CD8-positive, alpha-beta memory T cell (primary cell): ENCODE measurements at regions of chr6 and their contacts with region 1.

Region 1: DNA sequence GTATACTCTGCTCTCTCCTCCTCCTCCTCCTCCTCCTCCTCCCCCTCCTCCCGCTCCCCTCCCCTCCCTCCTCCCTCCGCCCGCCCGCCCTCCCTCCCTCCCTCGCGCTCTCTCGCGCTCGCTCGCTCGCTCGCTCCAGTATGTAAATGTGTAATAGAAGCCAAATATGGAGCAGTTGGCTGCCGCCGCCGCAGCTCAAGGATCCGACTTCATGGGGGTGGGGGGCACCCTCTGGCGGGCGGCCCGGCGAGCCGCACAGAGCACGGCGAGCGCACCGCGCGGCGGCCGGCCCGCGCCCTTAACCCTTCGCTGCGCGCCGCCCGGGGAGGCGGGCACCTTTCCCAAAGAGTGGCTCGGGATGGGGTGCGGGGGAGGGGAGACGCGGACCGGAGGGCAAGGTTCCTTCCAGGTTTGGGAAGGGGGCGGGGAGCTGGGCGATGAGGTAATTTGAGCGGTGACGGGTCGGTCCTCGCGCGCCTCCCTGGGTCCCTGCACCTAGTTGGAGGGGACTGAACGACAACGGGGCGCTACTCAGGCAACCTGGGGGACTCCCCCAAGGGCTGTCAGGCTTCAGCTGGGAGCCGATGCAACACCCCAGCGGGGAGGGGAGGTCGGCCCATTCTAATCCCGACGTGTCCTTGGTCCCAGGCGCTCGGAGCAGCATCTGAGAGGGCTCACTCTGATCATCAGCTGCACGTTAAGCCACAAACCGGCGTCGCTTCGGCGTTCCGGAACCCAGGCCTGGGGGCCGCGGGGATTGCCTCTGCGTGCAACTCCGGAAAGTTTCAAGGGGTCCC is 409 bp upstream of the ATXN1 start:
- DNase-seq: peak; percentile 82 to 93 (median 84)
- H3K4me3 ChIP-seq: peak overlapping the region; percentile 89
- H3K4me3 Mint-ChIP-seq: peak overlapping the region; percentile 92 to 100 (median 98)
- H3K27ac ChIP-seq: peak overlapping the region; percentile 98
- H3K27ac Mint-ChIP-seq: peak overlapping the region; percentile 97 to 100 (median 99)
- H3K4me1 ChIP-seq: peaks cover 46% of the 10 kb centered on the region
- H3K4me1 Mint-ChIP-seq: peaks cover 59 to 71% (median 67%) of the 10 kb centered on the region in 3 donors
- H3K27me3 ChIP-seq: no peaks in the 10 kb centered on the region
- H3K27me3 Mint-ChIP-seq: peaks cover 0 to 4% of the 10 kb centered on the region in 2 donors

Region 2: GRCh38 chr6:16332175-16332542 is 429.5 kb before region 1 on chr6:
- CTCF ChIA-PET with region 1: interaction called, 21 read pairs
- POLR2A ChIA-PET with region 1: interaction called, 3 read pairs
- DNase-seq: peak; percentile 70 to 83 (median 71)
- H3K4me3 ChIP-seq: no peak overlapping the region
- H3K4me3 Mint-ChIP-seq: no peak overlapping the region
- H3K27ac ChIP-seq: no peak overlapping the region
- H3K27ac Mint-ChIP-seq: no peak overlapping the region
- H3K4me1 ChIP-seq: peaks cover 13% of the 10 kb centered on the region
- H3K4me1 Mint-ChIP-seq: peaks cover 6 to 16% (median 16%) of the 10 kb centered on the region in 3 donors
- H3K27me3 ChIP-seq: no peaks in the 10 kb centered on the region
- H3K27me3 Mint-ChIP-seq: peaks cover 0 to 2% of the 10 kb centered on the region in 2 donors

Region 3: DNA sequence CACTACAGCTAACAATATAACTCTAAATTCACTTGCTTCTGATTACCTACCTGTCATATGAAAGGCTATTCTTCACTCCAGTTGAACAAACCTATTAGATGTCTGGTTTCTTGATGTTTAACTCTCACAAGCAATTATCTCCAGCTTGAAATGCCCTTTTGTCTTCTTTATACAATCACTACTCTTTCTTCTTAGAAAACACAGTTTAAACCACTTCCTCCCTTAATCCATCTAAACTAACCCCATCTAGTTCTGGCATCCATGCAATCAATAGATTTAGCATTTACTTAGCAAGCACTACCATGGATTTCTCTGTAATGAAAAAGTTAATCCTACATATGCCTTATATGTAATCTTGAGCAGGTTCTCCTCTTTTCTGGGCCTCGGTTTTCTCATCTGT is 127.7 kb before region 1 on chr6:
- CTCF ChIA-PET with region 1: no interaction called
- POLR2A ChIA-PET with region 1: interaction called, 10 read pairs
- DNase-seq: no peak
- H3K4me3 ChIP-seq: no peak overlapping the region
- H3K4me3 Mint-ChIP-seq: no peak overlapping the region
- H3K27ac ChIP-seq: no peak overlapping the region
- H3K27ac Mint-ChIP-seq: peak overlapping the region in 6 of 8 donors; percentile 2 to 65 (median 46)
- H3K4me1 ChIP-seq: peaks cover 10% of the 10 kb centered on the region
- H3K4me1 Mint-ChIP-seq: peaks cover 37 to 59% (median 57%) of the 10 kb centered on the region in 3 donors
- H3K27me3 ChIP-seq: no peaks in the 10 kb centered on the region
- H3K27me3 Mint-ChIP-seq: no peaks in the 10 kb centered on the region

Region 4: DNA sequence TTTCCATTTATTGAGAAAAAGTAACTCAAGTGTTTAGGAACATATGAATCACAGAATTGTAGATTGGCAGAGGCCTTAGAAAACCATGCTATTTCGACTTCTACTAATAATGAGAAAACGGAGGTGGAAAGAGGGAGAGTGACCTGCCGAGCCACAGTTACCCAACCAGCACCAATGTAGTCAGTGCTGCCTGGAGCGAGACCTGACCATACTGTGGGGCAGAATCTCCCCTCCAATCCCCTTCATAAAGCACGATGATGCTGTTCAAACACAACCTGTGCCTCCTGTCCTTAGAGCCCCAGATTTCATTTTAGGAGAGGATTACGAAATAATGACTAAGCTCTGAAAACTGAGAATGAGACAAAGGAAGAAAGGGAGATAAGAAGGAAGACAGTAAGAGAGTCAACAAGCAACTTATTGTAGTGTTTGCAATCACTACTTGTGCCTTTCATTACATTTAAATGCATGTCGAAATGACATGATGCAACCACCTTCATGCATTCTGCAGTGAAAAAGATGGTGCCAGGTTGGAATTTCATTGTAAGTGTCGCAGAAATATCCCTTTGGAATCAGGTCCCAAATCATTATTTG is 71.0 kb before region 1 on chr6:
- CTCF ChIA-PET with region 1: interaction called, 6 read pairs
- POLR2A ChIA-PET with region 1: interaction called, 11 read pairs
- DNase-seq: no peak
- H3K4me3 ChIP-seq: no peak overlapping the region
- H3K4me3 Mint-ChIP-seq: peak overlapping the region in 6 of 7 donors; percentile 40 to 79 (median 64)
- H3K27ac ChIP-seq: no peak overlapping the region
- H3K27ac Mint-ChIP-seq: peak overlapping the region; percentile 2 to 94 (median 86)
- H3K4me1 ChIP-seq: peaks cover 39% of the 10 kb centered on the region
- H3K4me1 Mint-ChIP-seq: peaks cover 69 to 96% (median 95%) of the 10 kb centered on the region in 3 donors
- H3K27me3 ChIP-seq: no peaks in the 10 kb centered on the region
- H3K27me3 Mint-ChIP-seq: no peaks in the 10 kb centered on the region

Region 5: DNA sequence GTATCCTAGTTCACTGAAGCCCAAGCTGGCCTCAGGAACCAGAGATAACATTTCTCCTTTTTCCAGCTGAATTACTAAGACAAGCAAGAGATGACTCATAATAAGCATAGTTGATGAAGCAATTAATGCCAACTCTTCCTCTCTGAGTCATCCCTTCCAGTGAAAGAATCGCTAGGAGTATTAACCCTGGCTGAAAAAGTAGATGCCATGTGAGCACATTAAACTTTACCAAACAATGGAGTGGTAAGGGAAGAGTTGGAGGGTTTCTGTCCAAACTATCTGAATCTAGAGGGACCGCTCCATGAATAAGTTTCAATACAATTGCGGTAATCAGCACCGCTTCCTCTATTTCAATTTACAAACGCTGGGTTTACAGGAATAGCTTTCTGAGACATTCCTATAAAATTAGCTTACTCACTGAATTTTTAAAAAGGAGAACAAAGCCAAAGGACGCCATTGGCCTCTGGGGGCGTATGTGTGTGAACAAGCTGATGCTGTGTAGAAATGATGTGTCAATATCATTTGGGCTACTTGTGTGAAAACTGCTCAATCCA is 48.7 kb before region 1 on chr6:
- CTCF ChIA-PET with region 1: interaction called, 17 read pairs
- POLR2A ChIA-PET with region 1: interaction called, 14 read pairs
- DNase-seq: no peak
- H3K4me3 ChIP-seq: peak overlapping the region; percentile 18
- H3K4me3 Mint-ChIP-seq: peak overlapping the region; percentile 73 to 86 (median 80)
- H3K27ac ChIP-seq: peak overlapping the region; percentile 52
- H3K27ac Mint-ChIP-seq: peak overlapping the region; percentile 87 to 99 (median 94)
- H3K4me1 ChIP-seq: peaks cover 17% of the 10 kb centered on the region
- H3K4me1 Mint-ChIP-seq: peaks cover 50 to 84% (median 78%) of the 10 kb centered on the region in 3 donors
- H3K27me3 ChIP-seq: no peaks in the 10 kb centered on the region
- H3K27me3 Mint-ChIP-seq: no peaks in the 10 kb centered on the region

Region 6: DNA sequence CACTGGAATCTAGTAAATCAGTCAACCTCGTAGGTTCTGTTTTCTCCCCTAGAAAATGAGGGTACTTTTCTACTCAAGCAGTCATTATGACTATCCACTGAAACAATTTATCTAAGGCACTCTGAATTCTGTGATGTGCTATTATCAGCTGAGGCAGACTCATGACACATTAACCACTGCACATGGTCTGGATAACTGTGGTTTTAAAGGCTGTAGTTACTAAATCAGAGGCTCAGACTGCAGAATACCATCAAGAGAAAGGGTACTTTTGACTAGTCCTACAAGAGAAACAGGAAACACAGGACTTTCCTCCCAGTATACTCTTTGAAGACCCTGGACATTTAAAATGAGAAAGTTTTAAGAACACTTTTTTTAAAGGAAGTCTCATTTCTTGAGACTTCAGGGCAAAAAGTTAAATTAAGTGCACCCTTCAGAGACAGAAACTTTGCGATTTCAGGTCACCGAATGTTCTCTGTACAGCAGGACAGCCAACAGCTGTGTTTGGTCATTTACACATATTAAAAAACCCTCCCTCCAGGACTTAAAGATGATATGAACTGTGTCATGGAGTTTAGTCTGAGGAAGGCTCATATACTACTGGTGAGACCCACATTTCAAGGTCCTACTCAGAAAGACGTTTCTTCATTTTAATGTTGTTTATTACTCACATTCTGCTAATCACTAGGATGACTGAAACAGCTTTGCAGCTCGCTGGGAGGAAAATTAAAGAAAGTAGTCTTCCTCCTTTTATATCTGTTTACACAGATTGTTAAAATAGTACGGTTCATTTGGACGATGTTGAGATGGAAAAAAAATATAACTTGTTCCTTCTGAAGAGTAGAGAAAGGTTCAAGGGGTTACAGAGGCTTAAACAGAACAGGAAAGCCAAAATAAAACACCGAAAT is 20.3 kb before region 1 on chr6:
- CTCF ChIA-PET with region 1: interaction called, 12 read pairs
- POLR2A ChIA-PET with region 1: interaction called, 20 read pairs
- DNase-seq: no peak
- H3K4me3 ChIP-seq: no peak overlapping the region
- H3K4me3 Mint-ChIP-seq: peak overlapping the region in 1 of 7 donors; percentile 25
- H3K27ac ChIP-seq: no peak overlapping the region
- H3K27ac Mint-ChIP-seq: peak overlapping the region; percentile 3 to 90 (median 68)
- H3K4me1 ChIP-seq: peaks cover 22% of the 10 kb centered on the region
- H3K4me1 Mint-ChIP-seq: peaks cover 79 to 98% (median 97%) of the 10 kb centered on the region in 3 donors
- H3K27me3 ChIP-seq: no peaks in the 10 kb centered on the region
- H3K27me3 Mint-ChIP-seq: no peaks in the 10 kb centered on the region

Region 7: DNA sequence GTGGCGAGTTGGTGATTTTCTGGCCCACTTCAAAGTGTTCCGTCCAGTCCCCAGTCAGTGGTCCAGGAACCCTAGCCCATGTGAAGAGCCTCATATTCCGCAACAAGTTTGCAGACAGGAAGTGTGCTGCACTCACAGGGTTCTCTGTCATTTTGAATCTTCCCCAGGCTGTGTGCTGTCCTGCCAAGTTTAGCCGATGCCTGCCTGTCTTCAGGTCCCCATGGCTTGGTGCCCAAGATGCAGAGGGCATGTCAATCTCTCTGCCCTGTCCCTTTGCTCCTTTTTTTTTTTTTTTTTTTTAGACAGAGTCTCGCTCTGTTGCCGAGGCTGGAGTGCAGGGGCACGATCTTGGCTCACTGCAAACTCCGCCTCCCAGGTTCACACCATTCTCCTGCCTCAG is 69.5 kb after region 1 on chr6:
- CTCF ChIA-PET with region 1: no interaction called
- POLR2A ChIA-PET with region 1: no interaction called
- DNase-seq: no peak
- H3K4me3 ChIP-seq: no peak overlapping the region
- H3K4me3 Mint-ChIP-seq: no peak overlapping the region
- H3K27ac ChIP-seq: no peak overlapping the region
- H3K27ac Mint-ChIP-seq: no peak overlapping the region
- H3K4me1 ChIP-seq: peaks cover under 1% of the 10 kb centered on the region
- H3K4me1 Mint-ChIP-seq: peaks cover 7 to 22% (median 18%) of the 10 kb centered on the region in 3 donors
- H3K27me3 ChIP-seq: no peaks in the 10 kb centered on the region
- H3K27me3 Mint-ChIP-seq: peaks cover 0 to 2% of the 10 kb centered on the region in 2 donors

Region 8: GRCh38 chr6:17093686-17094085 is 332.0 kb after region 1 on chr6:
- CTCF ChIA-PET with region 1: no interaction called
- POLR2A ChIA-PET with region 1: no interaction called
- DNase-seq: no peak
- H3K4me3 ChIP-seq: no peak overlapping the region
- H3K4me3 Mint-ChIP-seq: no peak overlapping the region
- H3K27ac ChIP-seq: no peak overlapping the region
- H3K27ac Mint-ChIP-seq: no peak overlapping the region
- H3K4me1 ChIP-seq: no peaks in the 10 kb centered on the region
- H3K4me1 Mint-ChIP-seq: no peaks in the 10 kb centered on the region
- H3K27me3 ChIP-seq: peaks cover 6% of the 10 kb centered on the region
- H3K27me3 Mint-ChIP-seq: peaks cover 10 to 48% of the 10 kb centered on the region in 2 donors

Region 9: DNA sequence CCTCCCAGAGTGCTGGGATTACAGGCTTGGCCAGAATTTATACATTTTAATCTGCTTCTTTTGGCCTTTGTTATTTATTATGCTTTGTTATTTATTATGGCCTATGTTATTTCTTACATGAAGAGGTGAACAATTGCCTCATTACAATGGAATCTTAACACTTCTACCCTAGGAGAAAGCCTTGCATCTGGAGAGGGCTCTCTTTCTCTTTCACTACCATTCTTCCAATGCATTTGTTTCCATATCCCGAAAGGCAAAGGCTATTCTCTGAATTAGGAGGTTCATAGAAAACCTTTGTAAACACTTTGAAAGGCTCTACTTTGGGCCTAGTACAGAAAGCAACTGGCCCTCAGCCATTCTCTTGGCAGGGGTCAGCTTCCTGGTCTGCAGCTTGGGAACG is 1522.6 kb after region 1 on chr6:
- CTCF ChIA-PET with region 1: no interaction called
- POLR2A ChIA-PET with region 1: no interaction called
- DNase-seq: no peak
- H3K4me3 ChIP-seq: no peak overlapping the region
- H3K4me3 Mint-ChIP-seq: no peak overlapping the region
- H3K27ac ChIP-seq: no peak overlapping the region
- H3K27ac Mint-ChIP-seq: no peak overlapping the region
- H3K4me1 ChIP-seq: no peaks in the 10 kb centered on the region
- H3K4me1 Mint-ChIP-seq: no peaks in the 10 kb centered on the region
- H3K27me3 ChIP-seq: peaks cover 7% of the 10 kb centered on the region
- H3K27me3 Mint-ChIP-seq: peaks cover 32 to 49% of the 10 kb centered on the region in 2 donors